ENCODE measurements at regions of chr1 and their contacts with region 1.

Region 1: GRCh38 chr1:155323798-155324610 is 3.3 kb downstream of the RUSC1 start:
- DNase-seq: peak; percentile 95
- H3K4me3 ChIP-seq: peak overlapping the region; percentile 84 to 95
- H3K27ac ChIP-seq: peak overlapping the region; percentile 95
- H3K4me1 ChIP-seq: peaks cover 12 to 37% of the 10 kb centered on the region in 2 experiments
- H3K27me3 ChIP-seq: no peaks in the 10 kb centered on the region
- CTCF ChIP-seq: no peak
- EP300 ChIP-seq: no peak
- RAD21 ChIP-seq: no peak

Region 2: DNA sequence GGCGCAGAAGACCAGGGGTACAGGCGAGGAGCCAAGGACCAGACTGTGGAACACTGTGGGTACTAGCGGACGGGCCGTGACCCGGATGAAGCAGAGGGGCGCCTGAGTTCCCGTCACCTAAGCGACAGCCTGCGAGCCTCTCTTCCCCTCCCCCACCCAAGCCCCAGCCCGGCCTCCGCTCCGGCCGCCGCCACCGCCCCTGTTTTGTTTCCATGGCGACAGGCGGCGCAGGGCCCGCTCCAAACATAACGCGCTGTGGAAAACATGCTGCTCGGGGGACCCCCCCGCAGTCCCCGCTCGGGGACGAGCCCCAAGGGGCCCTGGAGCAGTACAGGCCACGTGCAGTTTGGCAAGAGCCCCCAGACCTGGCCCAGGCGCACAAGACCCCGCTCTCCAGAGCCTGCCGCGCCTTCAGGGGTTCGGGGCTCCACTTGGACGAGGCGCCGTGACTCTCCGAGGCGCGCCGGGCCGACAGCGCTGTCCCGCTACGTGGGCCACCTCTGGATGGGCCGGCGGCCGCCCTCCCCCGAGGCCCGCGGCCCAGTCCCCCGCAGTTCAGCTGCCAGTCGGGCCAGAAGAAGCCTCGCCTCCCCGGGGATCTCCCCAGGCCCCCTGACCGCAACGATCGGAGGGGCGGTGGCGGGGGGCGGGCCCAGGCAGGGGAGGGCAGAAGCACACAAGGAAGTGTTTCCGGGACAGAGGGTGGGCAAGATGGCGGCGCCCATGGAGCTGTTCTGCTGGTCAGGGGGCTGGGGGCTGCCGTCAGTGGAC is 115.3 kb before region 1 on chr1 and contains the start of gene MTX1:
- CTCF ChIA-PET with region 1: interaction called, 22 read pairs
- POLR2A ChIA-PET with region 1: no interaction called
- DNase-seq: peak; percentile 93
- H3K4me3 ChIP-seq: peak within 1 kb of the TSS; percentile 65 to 98
- H3K27ac ChIP-seq: peak within 1 kb of the TSS; percentile 93 to 98
- H3K4me1 ChIP-seq: peaks cover 0 to 29% of the 10 kb centered on the region in 2 experiments; a peak in 3 of 4 replicates
- H3K27me3 ChIP-seq: no peaks in the 10 kb centered on the region
- CTCF ChIP-seq: no peak
- EP300 ChIP-seq: peak; percentile 2 to 36; a peak in 1 of 4 replicates
- RAD21 ChIP-seq: no peak
- polyA plus RNA-seq, gene MTX1: 79.1 TPM in 2 replicates

Region 3: DNA sequence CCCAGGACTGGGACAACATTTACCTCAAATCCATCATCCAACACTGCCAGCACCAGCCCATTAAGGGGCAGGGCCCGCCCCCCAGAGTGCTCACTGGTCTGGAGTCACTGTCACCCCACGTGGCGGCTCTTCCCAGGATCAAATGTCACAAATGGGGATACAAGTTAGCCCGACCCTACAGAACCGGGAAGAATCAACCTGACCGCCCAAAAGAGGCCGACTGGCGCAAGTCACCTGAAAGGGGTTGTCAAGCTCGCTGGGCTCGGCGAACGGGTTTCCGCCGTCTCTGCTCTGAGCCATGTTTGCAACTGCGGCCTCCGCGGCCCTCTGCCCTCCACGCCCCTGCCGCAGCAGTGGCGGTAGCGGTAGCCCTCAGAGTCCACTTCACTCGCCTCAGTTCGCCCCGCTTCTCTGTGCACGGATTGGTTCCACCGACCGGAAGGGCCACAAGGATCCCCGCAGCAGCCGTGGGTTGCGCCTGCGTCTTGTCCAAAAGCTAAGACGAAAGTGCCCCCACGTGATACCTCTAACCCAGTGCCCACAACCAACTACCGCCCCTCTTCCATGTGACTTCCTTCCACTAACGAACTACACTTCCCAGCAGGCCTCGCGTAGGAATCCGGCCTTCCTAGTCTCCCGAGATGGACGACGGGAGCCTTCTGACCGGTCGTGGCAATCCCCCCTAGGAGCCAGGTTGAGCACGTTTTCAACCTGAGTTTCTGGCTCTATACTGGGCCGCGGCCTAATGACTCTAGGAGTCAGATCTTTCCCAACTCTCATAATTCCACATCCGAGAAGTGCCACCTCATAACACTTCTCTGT is 61.9 kb before region 1 on chr1 and contains the start of gene SCAMP3:
- CTCF ChIA-PET with region 1: interaction called, 10 read pairs
- POLR2A ChIA-PET with region 1: interaction called, 9 read pairs
- DNase-seq: peak; percentile 95
- H3K4me3 ChIP-seq: peak within 1 kb of the TSS; percentile 93 to 94
- H3K27ac ChIP-seq: peak within 1 kb of the TSS; percentile 75 to 92
- H3K4me1 ChIP-seq: peaks cover 0 to 15% of the 10 kb centered on the region in 2 experiments; a peak in 2 of 4 replicates
- H3K27me3 ChIP-seq: no peaks in the 10 kb centered on the region
- CTCF ChIP-seq: 0 out of 2 replicates have a peak, but pooled peaks have one; percentile 1
- EP300 ChIP-seq: no peak
- RAD21 ChIP-seq: no peak
- polyA plus RNA-seq, gene SCAMP3: 193 and 225 TPM in 2 replicates

Region 4: DNA sequence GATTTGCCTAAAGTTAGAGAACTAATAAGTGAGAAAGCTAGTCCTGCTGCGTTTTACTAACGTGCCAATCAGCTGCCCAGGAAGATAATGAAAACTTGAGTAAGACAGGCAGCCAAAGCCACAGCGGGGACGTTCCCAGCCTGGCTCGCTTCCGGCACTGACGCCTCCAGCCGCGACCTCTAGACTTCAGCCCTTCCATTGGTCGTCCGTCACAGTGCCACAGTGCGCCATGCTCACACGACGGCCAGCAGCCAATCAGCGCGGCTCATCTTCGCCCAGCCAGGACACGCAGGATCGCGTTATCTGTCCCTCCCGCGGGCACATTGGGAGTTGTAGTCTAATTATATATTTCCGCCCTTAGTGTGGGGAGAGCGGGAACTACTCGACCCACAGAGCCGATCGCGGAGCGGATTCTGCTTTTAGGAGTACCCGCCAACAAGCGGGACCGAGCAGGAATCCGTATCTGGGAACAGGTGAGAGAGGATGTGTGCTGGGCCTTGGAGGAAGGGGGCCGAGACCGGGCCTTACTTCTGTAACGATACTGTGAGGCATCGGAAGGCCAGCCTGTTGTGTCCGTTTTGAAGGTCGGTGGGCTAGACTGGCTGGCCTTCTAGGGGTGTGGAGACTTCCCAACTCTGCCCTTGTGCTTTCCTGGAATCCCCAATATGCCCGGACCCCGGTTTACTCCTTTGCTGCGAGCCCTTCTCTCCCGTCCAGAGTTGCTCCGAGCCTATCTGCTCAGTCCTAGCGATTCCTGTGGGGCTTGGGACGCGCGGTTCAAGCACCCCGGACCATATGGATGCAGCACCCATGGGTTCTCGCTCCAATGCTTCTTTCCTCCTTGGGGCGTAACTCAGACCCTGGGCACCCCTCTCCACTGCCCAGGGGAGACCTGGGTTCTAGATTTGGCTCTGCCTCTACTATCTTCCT is 15.2 kb before region 1 on chr1 and contains the start of gene FDPS:
- CTCF ChIA-PET with region 1: interaction called, 12 read pairs
- POLR2A ChIA-PET with region 1: interaction called, 7 read pairs
- DNase-seq: peak; percentile 94
- H3K4me3 ChIP-seq: peak within 1 kb of the TSS; percentile 74 to 76
- H3K27ac ChIP-seq: peak within 1 kb of the TSS; percentile 79 to 92
- H3K4me1 ChIP-seq: peaks cover 0 to 10% of the 10 kb centered on the region in 2 experiments; a peak in 1 of 4 replicates
- H3K27me3 ChIP-seq: no peaks in the 10 kb centered on the region
- CTCF ChIP-seq: no peak
- EP300 ChIP-seq: no peak
- RAD21 ChIP-seq: no peak
- polyA plus RNA-seq, gene FDPS: 126 and 142 TPM in 2 replicates

Region 5: GRCh38 chr1:155504207-155504606 is 180.2 kb after region 1 on chr1:
- CTCF ChIA-PET with region 1: interaction called, 14 read pairs
- POLR2A ChIA-PET with region 1: no interaction called
- DNase-seq: peak; percentile 50
- H3K4me3 ChIP-seq: no peak overlapping the region
- H3K27ac ChIP-seq: no peak overlapping the region
- H3K4me1 ChIP-seq: peaks cover 5 to 8% of the 10 kb centered on the region in 2 experiments; a peak in 3 of 4 replicates
- H3K27me3 ChIP-seq: no peaks in the 10 kb centered on the region
- CTCF ChIP-seq: peak; percentile 61
- EP300 ChIP-seq: no peak
- RAD21 ChIP-seq: peak; percentile 87